Ascending aorta (tissue), 2 donors: ENCODE measurements at regions of chr11 and their contacts with region 1.

Region 1: DNA sequence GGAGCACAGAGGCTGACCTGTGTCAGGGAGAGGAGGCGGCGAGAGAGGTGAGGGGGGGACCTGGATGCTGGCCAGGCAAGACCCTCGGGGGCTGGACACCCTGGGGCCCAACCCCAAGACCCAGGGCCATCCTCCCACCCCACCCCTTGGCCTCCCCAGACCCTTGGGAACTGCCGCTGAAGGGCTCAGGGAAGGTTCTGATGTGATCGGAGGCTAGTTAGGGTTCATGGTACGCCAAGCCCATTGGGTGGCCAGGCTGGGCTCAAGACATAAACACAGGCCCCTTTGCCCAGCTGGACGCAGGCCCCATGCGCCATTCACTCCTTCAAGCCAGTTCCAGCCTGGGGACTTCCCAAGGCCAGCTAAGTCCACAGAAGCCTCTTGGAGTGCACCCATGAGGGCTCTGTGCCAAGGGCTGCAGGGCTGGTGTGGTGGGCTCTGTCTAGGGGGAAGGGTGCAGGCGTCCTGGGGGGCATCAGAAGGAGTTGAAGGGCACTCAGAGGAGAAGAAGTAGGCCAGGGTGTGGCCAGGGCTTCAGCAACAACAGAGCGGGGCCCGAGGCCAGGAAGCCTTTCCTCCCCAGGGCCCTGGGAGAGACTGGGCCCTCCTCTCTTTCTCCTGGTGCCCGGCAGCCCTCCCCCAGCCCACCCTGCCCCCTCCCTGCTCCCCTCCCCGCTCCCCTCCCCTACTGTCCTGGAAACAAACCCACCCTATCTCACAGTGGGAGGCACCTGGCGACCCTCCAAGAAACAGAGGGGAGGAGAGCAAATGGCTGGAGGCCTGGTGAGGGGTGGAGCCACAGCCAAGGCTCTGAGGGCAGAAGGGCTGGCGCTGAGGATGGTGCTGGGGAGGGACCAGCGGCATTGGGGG is 12.9 kb downstream of the TSPAN32 start:
- DNase-seq: peak in 1 of 2 donors; percentile 93
- H3K4me3 ChIP-seq: peak overlapping the region in 1 of 2 donors; percentile 36
- H3K27ac ChIP-seq: peak overlapping the region; percentile 80 to 82
- H3K4me1 ChIP-seq: peaks cover 8 to 19% of the 10 kb centered on the region in 2 donors
- H3K27me3 ChIP-seq: no peaks in the 10 kb centered on the region
- CTCF ChIP-seq: no peak

Region 2: GRCh38 chr11:2377511-2378443 is 63.0 kb after region 1 on chr11:
- intact Hi-C with region 1: loop called (anchors 2 kb)
- DNase-seq: peak in 1 of 2 donors; percentile 87
- H3K4me3 ChIP-seq: peak overlapping the region; percentile 79 to 98
- H3K27ac ChIP-seq: peak overlapping the region; percentile 97 to 99
- H3K4me1 ChIP-seq: peaks cover 14 to 37% of the 10 kb centered on the region in 2 donors
- H3K27me3 ChIP-seq: no peaks in the 10 kb centered on the region
- CTCF ChIP-seq: no peak